GM10248 (cell line): ENCODE measurements at regions of chr6 and their contacts with region 1.

Region 1: GRCh38 chr6:122730775-122731386 is 48.6 kb upstream of the FABP7 start:
- DNase-seq: no peak
- CTCF ChIP-seq: peak; percentile 56

Region 2: DNA sequence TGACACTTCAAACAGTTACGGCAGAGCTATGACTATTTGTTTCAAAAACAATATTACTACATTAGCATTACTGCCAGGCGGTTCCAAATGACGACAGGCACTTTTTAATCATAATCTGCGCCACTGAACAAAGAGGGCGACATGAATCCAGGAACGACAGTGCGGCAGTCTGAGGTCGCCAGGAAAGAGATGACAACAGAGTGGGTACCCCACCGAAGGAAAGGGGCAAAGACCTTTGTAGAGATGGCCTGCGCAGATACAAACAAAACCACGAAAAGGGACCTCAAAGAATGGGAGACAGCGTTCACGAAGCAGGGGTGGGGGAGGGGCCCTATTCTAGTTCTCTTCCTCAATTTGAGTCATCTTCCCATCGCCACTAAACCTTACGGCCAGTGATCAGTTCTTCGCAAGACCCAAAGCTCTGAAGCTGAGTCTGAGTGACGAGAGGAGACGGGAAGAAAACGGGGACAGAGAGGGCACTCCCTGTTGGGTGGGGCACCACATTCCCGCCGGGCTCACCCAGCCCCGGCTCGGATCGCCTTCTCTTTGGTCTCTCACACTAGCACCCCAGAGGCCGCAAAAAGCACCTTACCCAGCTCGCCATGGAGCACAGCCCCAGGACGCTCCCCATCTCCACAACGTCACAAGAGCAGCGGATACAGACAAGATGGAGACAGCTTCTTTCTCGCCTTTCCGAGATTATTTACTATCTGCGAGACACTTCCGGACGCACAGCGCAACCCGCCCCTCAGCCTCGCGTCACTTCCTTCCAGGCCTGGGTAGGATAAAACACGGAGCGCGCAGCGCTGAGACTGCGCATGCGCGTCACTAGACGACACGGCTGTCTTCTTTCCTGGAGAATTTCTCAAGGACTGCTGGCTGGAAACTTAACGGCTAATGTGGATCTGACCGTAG is 259.5 kb before region 1 on chr6 and contains the start of gene SERINC1:
- CTCF ChIA-PET with region 1: no interaction called
- POLR2A ChIA-PET with region 1: no interaction called
- DNase-seq: peak; percentile 91
- CTCF ChIP-seq: no peak

Region 3: GRCh38 chr6:122717350-122717749 is 13.5 kb before region 1 on chr6:
- CTCF ChIA-PET with region 1: interaction called, 56 read pairs
- POLR2A ChIA-PET with region 1: no interaction called
- DNase-seq: no peak
- CTCF ChIP-seq: no peak

Region 4: DNA sequence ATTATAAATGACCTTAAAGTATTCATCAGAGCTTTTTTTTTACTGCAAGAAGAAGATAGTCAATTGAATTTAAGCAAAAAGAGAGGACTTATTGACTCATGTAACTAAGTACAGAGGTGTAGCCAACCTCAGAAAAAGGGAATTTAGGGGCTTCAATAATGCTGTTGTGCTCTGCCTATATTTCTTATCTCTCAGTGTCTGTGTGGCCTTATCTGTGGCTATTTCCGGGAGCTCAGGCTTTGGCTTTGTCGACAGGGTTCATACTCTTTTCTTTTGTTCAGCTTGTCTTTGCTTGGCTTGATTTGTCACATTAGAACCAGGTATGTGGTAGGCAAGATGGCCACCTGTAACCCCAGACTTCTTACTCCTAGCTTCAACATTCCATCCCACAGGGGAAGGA is 10.1 kb after region 1 on chr6:
- CTCF ChIA-PET with region 1: interaction called, 26 read pairs
- POLR2A ChIA-PET with region 1: no interaction called
- DNase-seq: no peak
- CTCF ChIP-seq: no peak

Region 5: DNA sequence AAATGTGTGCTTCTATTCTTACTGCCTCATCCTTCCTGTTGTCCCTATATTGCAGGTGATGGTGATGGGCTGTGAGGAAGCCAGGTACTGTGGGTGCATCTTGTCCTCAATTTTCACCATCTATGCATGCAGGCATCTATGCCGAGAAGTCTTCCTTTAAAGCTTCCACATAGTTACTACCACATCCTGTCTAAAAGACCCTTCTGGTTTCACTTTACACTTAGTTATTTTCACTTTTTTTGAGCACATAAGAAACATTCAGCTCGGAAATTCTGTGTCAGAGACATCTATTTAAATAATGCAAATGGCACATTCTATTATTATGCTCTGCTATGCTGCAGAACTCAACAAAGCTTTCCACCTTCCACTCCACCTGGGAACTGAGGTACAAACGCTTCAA is 20.4 kb after region 1 on chr6:
- CTCF ChIA-PET with region 1: interaction called, 26 read pairs
- POLR2A ChIA-PET with region 1: no interaction called
- DNase-seq: peak; percentile 29
- CTCF ChIP-seq: no peak

Region 6: DNA sequence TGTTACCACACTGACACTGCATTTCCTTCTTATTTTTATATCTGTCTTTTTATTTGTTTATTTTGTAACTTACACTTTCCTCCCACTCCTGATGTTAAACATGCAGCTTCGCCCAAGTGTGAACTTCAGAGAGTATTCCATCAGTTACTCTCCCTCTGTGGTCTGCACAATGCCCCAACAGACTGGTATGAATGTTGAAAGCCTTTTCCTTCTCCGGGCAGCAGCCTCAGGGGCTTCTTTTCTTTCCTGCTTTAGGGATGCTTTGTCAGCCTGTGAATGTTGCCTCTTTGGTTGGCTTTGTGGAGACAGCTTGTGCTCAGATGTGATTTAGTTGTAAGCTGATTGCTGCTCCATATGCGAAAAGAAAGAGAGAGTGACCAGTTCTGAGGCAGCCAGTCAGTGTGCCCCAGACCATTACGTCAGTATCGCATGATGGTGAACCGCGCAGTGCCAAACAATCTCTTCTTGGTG is 102.2 kb after region 1 on chr6:
- CTCF ChIA-PET with region 1: interaction called, 90 read pairs
- POLR2A ChIA-PET with region 1: no interaction called
- DNase-seq: no peak
- CTCF ChIP-seq: no peak

Region 7: DNA sequence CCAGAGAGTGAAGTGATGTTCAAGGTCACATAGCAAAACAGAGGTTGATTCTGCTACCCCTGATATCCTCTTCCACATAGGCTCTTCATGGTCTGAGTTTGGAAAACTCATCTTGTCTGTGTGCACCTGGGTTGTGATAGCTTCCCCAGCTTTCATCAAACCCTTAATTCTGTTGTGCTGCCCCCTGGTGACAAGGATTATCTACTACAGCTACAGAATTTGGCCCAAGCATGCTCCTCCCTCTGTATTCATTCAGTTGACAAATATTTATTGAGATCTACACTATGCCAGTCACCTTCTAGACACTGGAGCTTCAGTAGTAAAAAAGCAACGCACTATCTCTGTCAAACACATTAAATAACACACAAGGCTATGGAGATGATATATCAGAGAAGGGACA is 108.6 kb after region 1 on chr6:
- CTCF ChIA-PET with region 1: interaction called, 90 read pairs
- POLR2A ChIA-PET with region 1: no interaction called
- DNase-seq: peak; percentile 67
- CTCF ChIP-seq: peak; percentile 70